Caco-2 (cell line): ENCODE measurements at regions of chr13 and their contacts with region 1.

Region 1: DNA sequence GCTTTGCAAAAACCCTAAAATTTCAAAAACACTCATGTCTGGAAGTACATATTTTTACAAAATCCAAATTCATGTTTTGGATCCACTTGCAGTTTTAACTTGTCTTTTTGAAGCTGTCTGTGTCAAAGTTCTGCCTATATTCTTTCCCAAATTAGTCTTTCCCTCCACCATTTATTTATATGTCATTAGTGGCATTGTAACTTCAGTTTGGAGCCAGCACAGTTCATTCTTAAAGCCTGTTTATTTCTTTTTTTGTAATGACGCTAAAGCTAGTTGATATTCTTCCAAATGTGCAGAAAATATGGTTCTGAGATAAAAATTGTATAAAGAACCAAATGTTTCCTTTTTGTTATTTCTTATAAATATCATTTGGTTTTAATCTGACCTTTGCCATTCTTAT is 2039.3 kb downstream of the OLFM4 start:
- DNase-seq: no peak
- H3K4me3 ChIP-seq: no peak overlapping the region
- H3K4me3 Mint-ChIP-seq: no peak overlapping the region
- H3K27ac Mint-ChIP-seq: no peak overlapping the region
- H3K4me1 ChIP-seq: no peaks in the 10 kb centered on the region
- H3K4me1 Mint-ChIP-seq: no peaks in the 10 kb centered on the region
- H3K27me3 ChIP-seq: no peaks in the 10 kb centered on the region
- H3K27me3 Mint-ChIP-seq: no peaks in the 10 kb centered on the region
- CTCF ChIP-seq: no peak

Region 2: GRCh38 chr13:54953786-54954185 is 114.2 kb before region 1 on chr13:
- CTCF ChIA-PET with region 1: no interaction called
- POLR2A ChIA-PET with region 1: no interaction called
- intact Hi-C with region 1: no loop called
- DNase-seq: no peak
- H3K4me3 ChIP-seq: no peak overlapping the region
- H3K4me3 Mint-ChIP-seq: no peak overlapping the region
- H3K27ac Mint-ChIP-seq: no peak overlapping the region
- H3K4me1 ChIP-seq: no peaks in the 10 kb centered on the region
- H3K4me1 Mint-ChIP-seq: no peaks in the 10 kb centered on the region
- H3K27me3 ChIP-seq: no peaks in the 10 kb centered on the region
- H3K27me3 Mint-ChIP-seq: no peaks in the 10 kb centered on the region
- CTCF ChIP-seq: no peak

Region 3: DNA sequence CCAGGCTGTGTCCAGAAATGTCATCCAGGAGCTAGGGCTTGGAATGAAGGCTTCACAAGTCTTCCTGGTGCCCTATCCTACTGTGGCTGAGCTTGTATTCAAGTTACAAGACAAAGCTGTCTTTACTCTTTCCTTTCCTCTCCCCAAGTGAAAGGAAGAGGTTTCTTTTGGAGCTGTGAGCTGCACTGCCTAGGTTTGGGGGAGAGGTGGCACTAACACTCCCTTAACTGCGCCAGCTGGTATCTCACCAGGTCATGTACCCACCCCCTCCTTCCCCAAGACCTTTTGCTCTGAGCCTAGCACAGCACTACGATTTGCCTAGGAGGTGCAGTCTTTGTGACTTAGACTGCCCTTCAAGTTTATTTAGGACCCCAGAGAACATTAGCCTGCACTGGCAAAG is 19.1 kb after region 1 on chr13:
- CTCF ChIA-PET with region 1: no interaction called
- POLR2A ChIA-PET with region 1: no interaction called
- intact Hi-C with region 1: loop called (anchors 2 kb)
- DNase-seq: no peak
- H3K4me3 ChIP-seq: no peak overlapping the region
- H3K4me3 Mint-ChIP-seq: no peak overlapping the region
- H3K27ac Mint-ChIP-seq: no peak overlapping the region
- H3K4me1 ChIP-seq: no peaks in the 10 kb centered on the region
- H3K4me1 Mint-ChIP-seq: no peaks in the 10 kb centered on the region
- H3K27me3 ChIP-seq: no peaks in the 10 kb centered on the region
- H3K27me3 Mint-ChIP-seq: no peaks in the 10 kb centered on the region
- CTCF ChIP-seq: no peak